Activated CD4-positive, alpha-beta T cell treated with anti-CD3 and anti-CD28 coated beads, Interleukin-2, amount 10 ng/mL, durations not matched to agents 7 days and 5 days (primary cell): ENCODE measurements at regions of chr10 and their contacts with region 1.

Region 1: GRCh38 chr10:102101152-102101551 is 19.0 kb downstream of the LDB1 start:
- DNase-seq: no peak
- H3K4me3 Mint-ChIP-seq: no peak overlapping the region
- H3K27ac Mint-ChIP-seq: no peak overlapping the region
- H3K4me1 Mint-ChIP-seq: peaks cover 18% of the 10 kb centered on the region
- H3K27me3 Mint-ChIP-seq: no peaks in the 10 kb centered on the region

Region 2: GRCh38 chr10:102114861-102115618 is 13.9 kb after region 1 on chr10:
- CTCF ChIA-PET with region 1: interaction called, 13 read pairs
- POLR2A ChIA-PET with region 1: interaction called, 3 read pairs
- DNase-seq: peak; percentile 90
- H3K4me3 Mint-ChIP-seq: peak overlapping the region; percentile 76
- H3K27ac Mint-ChIP-seq: peak overlapping the region; percentile 94
- H3K4me1 Mint-ChIP-seq: peaks cover 63% of the 10 kb centered on the region
- H3K27me3 Mint-ChIP-seq: no peaks in the 10 kb centered on the region

Region 3: GRCh38 chr10:102262744-102263370 is 161.7 kb after region 1 on chr10:
- CTCF ChIA-PET with region 1: no interaction called
- POLR2A ChIA-PET with region 1: no interaction called
- DNase-seq: no peak
- H3K4me3 Mint-ChIP-seq: no peak overlapping the region
- H3K27ac Mint-ChIP-seq: no peak overlapping the region
- H3K4me1 Mint-ChIP-seq: peaks cover 14% of the 10 kb centered on the region
- H3K27me3 Mint-ChIP-seq: no peaks in the 10 kb centered on the region